ENCODE measurements at regions of chr1 and their contacts with region 1.

Region 1: GRCh38 chr1:116724765-116725375 is 29.4 kb upstream of the CD2 start:
- DNase-seq: peak; percentile 94
- H3K4me3 Mint-ChIP-seq: no peak overlapping the region
- H3K27ac Mint-ChIP-seq: no peak overlapping the region
- H3K4me1 Mint-ChIP-seq: peaks cover 26% of the 10 kb centered on the region
- H3K27me3 Mint-ChIP-seq: no peaks in the 10 kb centered on the region

Region 2: GRCh38 chr1:116763787-116764465 is 39.1 kb after region 1 on chr1:
- CTCF ChIA-PET with region 1: interaction called, 12 read pairs
- intact Hi-C with region 1: loop called (anchors 1 kb)
- DNase-seq: peak; percentile 68
- H3K4me3 Mint-ChIP-seq: peak overlapping the region; percentile 100
- H3K27ac Mint-ChIP-seq: peak overlapping the region; percentile 100
- H3K4me1 Mint-ChIP-seq: peaks cover 87% of the 10 kb centered on the region
- H3K27me3 Mint-ChIP-seq: no peaks in the 10 kb centered on the region

Region 3: GRCh38 chr1:116873680-116874271 is 148.9 kb after region 1 on chr1:
- CTCF ChIA-PET with region 1: interaction called, 15 read pairs
- intact Hi-C with region 1: no loop called
- DNase-seq: peak; percentile 72
- H3K4me3 Mint-ChIP-seq: no peak overlapping the region
- H3K27ac Mint-ChIP-seq: peak overlapping the region; percentile 48
- H3K4me1 Mint-ChIP-seq: peaks cover 31% of the 10 kb centered on the region
- H3K27me3 Mint-ChIP-seq: no peaks in the 10 kb centered on the region

Region 4: GRCh38 chr1:116934586-116935207 is 209.8 kb after region 1 on chr1:
- CTCF ChIA-PET with region 1: interaction called, 13 read pairs
- intact Hi-C with region 1: no loop called
- DNase-seq: no peak
- H3K4me3 Mint-ChIP-seq: no peak overlapping the region
- H3K27ac Mint-ChIP-seq: no peak overlapping the region
- H3K4me1 Mint-ChIP-seq: peaks cover 18% of the 10 kb centered on the region
- H3K27me3 Mint-ChIP-seq: no peaks in the 10 kb centered on the region

Region 5: GRCh38 chr1:116971258-116971860 is 246.5 kb after region 1 on chr1:
- CTCF ChIA-PET with region 1: no interaction called
- intact Hi-C with region 1: no loop called
- DNase-seq: no peak
- H3K4me3 Mint-ChIP-seq: no peak overlapping the region
- H3K27ac Mint-ChIP-seq: no peak overlapping the region
- H3K4me1 Mint-ChIP-seq: no peaks in the 10 kb centered on the region
- H3K27me3 Mint-ChIP-seq: no peaks in the 10 kb centered on the region

Region 6: GRCh38 chr1:117051224-117052064 is 326.6 kb after region 1 on chr1:
- CTCF ChIA-PET with region 1: interaction called, 10 read pairs
- intact Hi-C with region 1: loop called (anchors 1 kb)
- DNase-seq: peak; percentile 69
- H3K4me3 Mint-ChIP-seq: peak overlapping the region; percentile 45
- H3K27ac Mint-ChIP-seq: peak overlapping the region; percentile 28
- H3K4me1 Mint-ChIP-seq: peaks cover 61% of the 10 kb centered on the region
- H3K27me3 Mint-ChIP-seq: no peaks in the 10 kb centered on the region